Gastrocnemius medialis (tissue), 4 donors: ENCODE measurements at regions of chr15 and their contacts with region 1.

Region 1: DNA sequence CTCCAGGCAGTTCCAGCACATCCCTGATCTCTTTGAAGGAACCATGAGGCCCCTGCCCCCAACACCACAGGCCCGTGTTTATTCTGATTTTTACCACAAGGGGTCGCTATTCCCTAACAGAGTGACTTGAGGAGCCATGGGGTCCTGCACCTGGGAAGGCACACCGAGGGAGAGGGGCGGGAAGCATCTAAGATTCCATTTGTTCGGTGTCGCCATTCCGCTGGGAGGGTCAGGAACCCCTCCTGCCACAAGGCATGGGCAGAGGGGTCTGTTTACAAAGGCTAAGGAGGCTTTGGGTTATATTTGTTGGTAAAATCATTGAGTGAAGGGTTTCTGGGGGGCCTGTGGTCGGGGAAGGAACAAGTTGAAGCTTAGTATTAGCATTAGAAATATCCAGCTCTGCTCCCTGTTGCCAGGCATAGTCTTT is 77.1 kb downstream of the WDR76 start:
- DNase-seq: no peak
- ATAC-seq: no peak
- H3K4me3 ChIP-seq: no peak overlapping the region
- H3K27ac ChIP-seq: no peak overlapping the region
- H3K4me1 ChIP-seq: no peaks in the 10 kb centered on the region
- H3K27me3 ChIP-seq: no peaks in the 10 kb centered on the region
- CTCF ChIP-seq: peak; percentile 22 to 63 (median 53)
- POLR2A ChIP-seq: no peak

Region 2: DNA sequence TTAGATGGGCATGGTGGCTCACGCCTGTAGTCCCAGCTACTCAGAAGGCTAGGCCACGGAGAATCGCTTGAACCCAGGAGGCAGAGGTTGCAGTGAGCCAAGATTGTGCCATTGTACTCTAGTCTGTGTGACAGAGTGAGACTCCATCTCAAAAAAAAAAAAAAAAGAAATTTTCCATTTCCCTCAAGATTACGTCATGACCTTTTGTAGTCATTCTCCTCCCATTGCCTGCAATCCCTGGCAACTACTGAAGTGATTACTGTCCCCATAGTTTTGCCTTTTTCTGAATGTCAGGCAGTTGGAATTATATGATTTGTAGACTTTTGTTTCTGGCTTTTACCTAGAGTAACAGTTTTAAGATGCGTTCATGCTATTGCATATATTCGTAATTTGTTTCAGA is 49.1 kb before region 1 on chr15:
- in situ Hi-C with region 1: no loop called
- intact Hi-C with region 1: no loop called
- DNase-seq: no peak
- ATAC-seq: no peak
- H3K4me3 ChIP-seq: no peak overlapping the region
- H3K27ac ChIP-seq: no peak overlapping the region
- H3K4me1 ChIP-seq: no peaks in the 10 kb centered on the region
- H3K27me3 ChIP-seq: no peaks in the 10 kb centered on the region
- CTCF ChIP-seq: no peak
- POLR2A ChIP-seq: no peak

Region 3: DNA sequence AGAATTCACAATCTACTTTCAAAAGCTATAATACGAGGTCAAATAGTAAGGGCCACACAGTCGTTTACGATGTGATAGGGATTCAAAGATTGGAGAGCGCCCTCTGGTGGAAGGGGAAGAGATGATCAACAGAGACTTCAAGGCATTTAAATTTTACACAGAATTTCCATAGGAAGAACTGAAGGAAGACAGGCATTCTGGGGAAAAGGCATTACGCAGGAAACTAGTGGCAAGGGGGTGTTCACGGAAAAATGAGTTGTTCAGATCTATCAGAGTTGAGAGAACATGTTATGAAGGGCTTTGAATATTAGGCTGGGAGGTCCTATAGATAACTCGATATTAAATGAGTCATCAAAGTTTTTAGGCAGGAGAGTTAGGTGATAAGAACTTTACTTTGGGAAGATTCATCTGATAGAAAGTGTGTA is 162.5 kb after region 1 on chr15:
- in situ Hi-C with region 1: loop called in 2 of 4 experiments (anchors 10 kb)
- intact Hi-C with region 1: loop called (anchors 2 kb)
- DNase-seq: no peak
- ATAC-seq: no peak
- H3K4me3 ChIP-seq: no peak overlapping the region
- H3K27ac ChIP-seq: no peak overlapping the region
- H3K4me1 ChIP-seq: no peaks in the 10 kb centered on the region
- H3K27me3 ChIP-seq: no peaks in the 10 kb centered on the region
- CTCF ChIP-seq: peak in 4 of 5 experiments; percentile 19 to 54 (median 42)
- POLR2A ChIP-seq: no peak